Posterior cingulate gyrus (tissue), 11 donors: ENCODE measurements at regions of chr9 and their contacts with region 1.

Region 1: GRCh38 chr9:81848472-81848871 is 79.8 kb upstream of the SPATA31D4 start:
- DNase-seq: no peak

Region 2: GRCh38 chr9:81529556-81530195 is 318.8 kb before region 1 on chr9:
- intact Hi-C with region 1: loop called (anchors 10 kb)
- DNase-seq: no peak